ENCODE measurements at regions of chr17 and their contacts with region 1.

Region 1: DNA sequence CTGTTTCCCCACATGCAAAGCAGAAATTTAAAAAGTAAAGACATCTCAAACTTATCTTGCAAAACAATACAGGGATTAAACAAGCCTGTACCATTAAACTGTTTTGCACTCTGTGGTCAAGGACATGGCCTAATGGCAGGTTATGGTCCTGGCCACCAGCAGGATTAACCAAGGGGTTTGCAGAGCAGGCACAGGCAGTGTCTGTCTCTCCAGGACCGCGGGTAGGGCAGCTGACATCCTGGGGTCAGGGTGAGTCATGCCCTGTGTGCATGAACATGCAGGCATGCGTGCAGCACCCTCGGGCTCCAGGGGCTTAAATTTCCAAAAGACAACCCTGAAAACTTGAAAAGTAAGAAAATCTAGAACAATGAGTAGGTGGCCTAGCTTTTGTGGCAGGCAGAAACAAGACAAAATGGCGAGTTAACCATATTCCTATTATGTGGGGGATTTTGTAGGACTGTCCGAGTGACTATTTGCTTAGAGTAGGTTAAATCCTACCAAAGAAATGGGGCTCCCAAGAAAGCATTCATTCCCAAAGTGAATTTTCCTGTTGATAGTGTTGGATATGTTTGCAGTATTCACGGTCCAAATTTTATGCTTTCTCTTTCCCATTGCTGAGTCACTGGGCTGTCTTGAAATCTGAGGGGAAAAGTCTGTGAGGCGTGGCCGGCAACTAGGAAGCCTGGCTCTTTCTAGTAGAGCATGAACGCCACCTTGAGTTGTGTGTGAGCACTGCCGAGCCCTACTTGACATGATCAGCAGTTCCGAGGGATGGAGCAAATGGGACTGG is 158.4 kb upstream of the FAM20A start:
- DNase-seq: peak; percentile 89
- ATAC-seq: peak; percentile 100

Region 2: DNA sequence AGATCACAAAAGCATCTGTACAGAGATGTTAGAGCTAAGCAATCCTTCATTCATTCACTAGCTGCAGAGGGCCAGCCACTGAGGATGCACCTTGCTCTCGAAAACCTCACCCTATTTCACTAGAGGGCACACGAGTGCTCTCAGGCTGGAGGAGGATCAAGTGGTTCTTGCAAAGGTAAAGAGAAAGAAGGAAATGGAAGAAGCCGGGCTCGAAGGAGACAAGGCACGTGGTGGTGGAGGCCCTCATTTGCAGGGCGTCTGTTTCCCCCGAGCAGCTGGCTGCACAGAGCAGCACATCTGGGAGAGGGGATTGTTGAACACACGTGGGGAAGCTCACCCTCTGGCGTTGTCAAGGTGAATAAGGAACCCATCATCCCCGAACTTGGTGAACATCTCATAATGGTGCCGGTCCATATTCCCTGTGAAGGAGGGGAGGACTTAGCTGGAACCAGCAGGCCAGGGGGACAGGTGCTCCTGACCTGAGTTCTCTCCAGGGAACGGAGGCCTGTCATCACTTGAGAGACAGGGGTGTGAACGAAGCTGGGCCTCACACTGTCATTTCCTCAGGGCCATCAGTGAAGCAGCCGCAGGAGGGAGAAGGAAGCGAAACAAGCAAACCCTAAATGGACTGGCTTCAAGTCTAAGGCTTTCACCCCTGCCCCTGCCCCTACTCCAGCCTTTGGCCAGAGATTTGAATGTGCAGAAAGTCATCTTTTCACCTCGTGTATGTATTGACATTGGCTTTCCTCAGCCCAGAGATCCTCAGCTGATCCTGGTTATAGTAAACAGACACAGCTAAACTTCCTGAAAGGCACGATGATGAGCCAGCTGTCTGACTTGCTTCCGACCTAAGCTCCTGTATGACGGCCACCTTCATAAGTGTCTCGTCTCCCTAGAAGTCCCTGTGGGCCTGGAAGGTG is 219.7 kb before region 1 on chr17:
- intact Hi-C with region 1: loop called (anchors 10 kb)
- DNase-seq: no peak
- ATAC-seq: peak; percentile 18

Region 3: DNA sequence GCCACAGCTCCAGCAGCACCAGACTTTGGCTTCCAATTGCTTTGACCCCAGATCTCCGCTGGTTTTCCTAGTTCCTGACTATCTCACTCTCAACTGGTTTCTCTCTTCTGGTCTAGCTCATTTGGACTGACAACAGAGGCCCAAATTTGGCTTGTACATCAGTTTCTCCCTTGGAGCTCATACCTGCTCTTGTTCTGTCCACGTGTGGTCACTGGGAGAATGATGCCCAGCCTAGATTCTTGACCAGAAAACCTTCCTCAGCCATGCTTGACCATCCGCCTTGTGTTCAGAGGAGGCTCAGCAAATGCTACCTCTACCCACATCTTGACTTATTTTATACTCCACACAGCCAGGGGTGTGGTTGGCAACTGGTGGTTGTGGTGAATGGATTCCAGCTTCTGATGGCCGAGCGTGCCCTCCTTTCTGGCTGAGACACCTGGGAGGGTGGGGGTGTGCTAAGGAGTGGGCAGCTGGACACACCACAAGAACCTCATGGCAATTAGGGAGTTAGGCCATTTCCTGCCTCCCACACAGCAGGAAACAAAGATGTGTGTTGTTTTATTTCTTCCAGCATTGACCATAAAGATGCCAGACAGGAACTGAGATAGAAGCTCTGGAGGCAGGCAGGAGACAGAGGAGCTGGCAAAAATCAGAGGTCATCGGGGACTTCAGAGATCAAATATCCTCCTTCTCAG is 64.6 kb before region 1 on chr17:
- intact Hi-C with region 1: no loop called
- DNase-seq: no peak
- ATAC-seq: no peak

Region 4: DNA sequence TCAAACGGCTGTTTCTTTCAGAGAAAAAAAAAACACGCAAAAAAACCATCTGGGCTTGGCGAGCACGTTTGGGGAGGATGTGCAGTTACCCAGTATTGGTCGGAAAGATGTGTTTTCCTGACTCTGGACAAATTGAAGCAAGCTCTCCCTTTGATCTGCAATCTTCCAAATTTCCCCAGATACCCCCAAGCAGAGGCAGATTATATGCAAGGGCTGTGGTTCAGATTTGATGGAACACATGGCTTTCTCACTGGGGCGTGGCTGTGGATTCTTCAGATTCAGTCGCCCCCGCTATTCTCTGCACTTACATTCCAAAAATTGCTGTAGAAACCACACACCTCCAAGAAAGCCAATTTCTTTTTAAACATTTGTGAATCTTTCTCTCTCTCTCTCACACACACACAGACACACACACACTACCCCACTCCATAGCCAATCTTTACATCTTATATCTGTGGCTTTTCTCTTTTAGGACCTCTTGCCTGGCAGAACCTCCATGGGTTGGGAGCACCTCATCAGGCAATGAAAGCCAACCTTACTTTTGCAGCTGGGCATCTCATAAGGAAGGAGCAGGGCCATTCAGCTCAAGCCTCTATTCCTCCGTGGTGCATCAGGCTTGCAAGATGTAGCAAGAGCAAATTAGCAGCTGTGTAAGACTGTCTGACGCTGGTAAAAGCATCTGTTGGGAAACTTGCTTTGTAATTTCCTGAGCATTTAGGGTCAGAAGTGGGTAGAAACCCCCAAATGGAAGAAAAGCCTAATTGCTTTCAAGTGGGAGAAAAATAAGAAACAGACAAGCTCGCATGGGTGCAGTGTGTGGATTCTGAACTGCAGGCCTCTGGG is 54.4 kb before region 1 on chr17:
- intact Hi-C with region 1: no loop called
- DNase-seq: no peak
- ATAC-seq: peak; percentile 56

Region 5: GRCh38 chr17:69300222-69300621 is 540.7 kb after region 1 on chr17:
- intact Hi-C with region 1: no loop called
- DNase-seq: no peak
- ATAC-seq: no peak